MCF 10A (cell line): ENCODE measurements at regions of chr5 and their contacts with region 1.

Region 1: DNA sequence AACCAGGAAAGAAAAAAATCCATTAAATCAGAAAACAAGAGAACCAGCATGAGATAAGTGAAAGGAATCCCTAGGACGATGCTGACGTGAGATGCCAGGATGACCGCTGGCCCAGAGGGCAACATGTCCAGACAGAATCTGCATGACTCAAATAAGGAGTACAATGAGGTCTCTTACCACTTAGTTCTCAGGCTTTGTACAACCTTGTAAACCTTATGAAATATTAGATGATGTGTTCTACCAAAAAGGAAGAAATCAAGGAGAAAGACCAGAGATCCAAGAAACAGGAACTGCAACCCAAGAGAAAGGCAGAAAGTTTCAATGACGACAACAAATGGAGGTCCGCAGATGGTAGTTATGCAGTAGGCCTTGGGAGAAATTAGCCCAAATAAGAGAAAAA is 2.8 kb upstream of the GPR150 start:
- DNase-seq: peak; percentile 83
- H3K4me3 Mint-ChIP-seq: peak overlapping the region; percentile 36
- H3K27ac Mint-ChIP-seq: peak overlapping the region; percentile 64
- H3K4me1 Mint-ChIP-seq: peaks cover 9% of the 10 kb centered on the region
- H3K27me3 Mint-ChIP-seq: no peaks in the 10 kb centered on the region
- CTCF ChIP-seq: no peak

Region 2: DNA sequence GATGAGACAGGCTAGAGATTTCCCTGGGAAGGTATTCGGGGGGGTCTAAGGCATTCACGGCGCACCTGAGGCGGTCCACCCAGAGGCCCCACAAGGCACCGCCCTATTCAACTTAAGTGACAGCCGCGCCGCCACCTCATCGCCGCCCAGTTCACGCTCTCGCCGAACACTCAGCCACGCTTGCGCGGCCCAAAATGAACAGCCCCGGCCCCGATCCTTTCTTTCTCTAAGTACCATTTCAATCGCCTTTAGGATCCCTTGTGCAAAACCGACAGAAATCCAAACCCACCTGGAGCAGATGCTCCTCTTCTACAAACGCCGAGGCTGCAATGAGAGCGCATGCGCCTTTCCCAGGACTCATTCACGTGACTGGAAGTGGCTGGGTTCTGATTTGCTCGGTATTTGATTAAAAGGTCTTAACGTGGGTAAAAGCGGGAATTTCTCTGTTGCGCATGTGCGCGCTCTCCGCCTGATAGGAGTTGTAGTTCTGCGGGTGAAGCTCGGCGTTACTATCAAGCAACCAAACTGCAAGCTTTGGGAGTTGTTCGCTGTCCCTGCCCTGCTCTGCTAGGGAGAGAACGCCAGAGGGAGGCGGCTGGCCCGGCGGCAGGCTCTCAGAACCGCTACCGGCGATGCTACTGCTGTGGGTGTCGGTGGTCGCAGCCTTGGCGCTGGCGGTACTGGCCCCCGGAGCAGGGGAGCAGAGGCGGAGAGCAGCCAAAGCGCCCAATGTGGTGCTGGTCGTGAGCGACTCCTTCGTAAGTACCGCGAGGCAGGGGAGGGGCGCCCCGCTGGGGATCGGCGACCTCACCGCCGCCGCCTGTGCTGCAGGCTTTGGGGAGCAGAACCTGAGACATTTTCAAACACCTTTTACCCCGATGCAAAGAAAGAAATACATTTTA is 62.2 kb before region 1 on chr5 and contains the starts of genes ARSK and SKIC3:
- CTCF ChIA-PET with region 1: no interaction called
- POLR2A ChIA-PET with region 1: interaction called, 14 read pairs
- intact Hi-C with region 1: loop called (anchors 2 kb)
- DNase-seq: peak; percentile 99
- H3K4me3 Mint-ChIP-seq: peak within 1 kb of the TSS; percentile 88
- H3K27ac Mint-ChIP-seq: peak within 1 kb of the TSS; percentile 74
- H3K4me1 Mint-ChIP-seq: peaks cover 26% of the 10 kb centered on the region
- H3K27me3 Mint-ChIP-seq: no peaks in the 10 kb centered on the region
- CTCF ChIP-seq: no peak
- total RNA-seq, gene ARSK: 3.6 and 5.4 TPM in 2 replicates
- total RNA-seq, gene SKIC3: 97.2 and 105 TPM in 2 replicates